ENCODE measurements at regions of chr5 and their contacts with region 1.

Region 1: GRCh38 chr5:138464008-138464387 is 1.3 kb upstream of the EGR1 start:
- DNase-seq: peak; percentile 89 to 96 (median 94)
- H3K4me3 ChIP-seq: peak overlapping the region; percentile 94
- H3K4me3 Mint-ChIP-seq: peak overlapping the region; percentile 87 to 96 (median 90)
- H3K27ac ChIP-seq: peak overlapping the region; percentile 95
- H3K27ac Mint-ChIP-seq: peak overlapping the region; percentile 90 to 98 (median 94)
- H3K4me1 ChIP-seq: peaks cover 42% of the 10 kb centered on the region
- H3K4me1 Mint-ChIP-seq: peaks cover 39 to 60% (median 51%) of the 10 kb centered on the region in 3 donors
- H3K27me3 ChIP-seq: no peaks in the 10 kb centered on the region
- H3K27me3 Mint-ChIP-seq: no peaks in the 10 kb centered on the region

Region 2: GRCh38 chr5:138438724-138439476 is 25.1 kb before region 1 on chr5 and contains the start of gene REEP2:
- CTCF ChIA-PET with region 1: interaction called, 102 read pairs
- POLR2A ChIA-PET with region 1: interaction called, 4 read pairs
- DNase-seq: peak; percentile 50 to 74 (median 56)
- H3K4me3 ChIP-seq: peak within 1 kb of the TSS; percentile 61
- H3K4me3 Mint-ChIP-seq: peak within 1 kb of the TSS; percentile 80 to 95 (median 83)
- H3K27ac ChIP-seq: no peak within 1 kb of the TSS
- H3K27ac Mint-ChIP-seq: peak within 1 kb of the TSS in 6 of 8 donors; percentile 50 to 90 (median 64)
- H3K4me1 ChIP-seq: peaks cover 10% of the 10 kb centered on the region
- H3K4me1 Mint-ChIP-seq: peaks cover 17 to 26% (median 17%) of the 10 kb centered on the region in 3 donors
- H3K27me3 ChIP-seq: no peaks in the 10 kb centered on the region
- H3K27me3 Mint-ChIP-seq: peaks cover 0 to 2% of the 10 kb centered on the region in 2 donors
- total RNA-seq, gene REEP2: 5.0 to 6.6 TPM

Region 3: GRCh38 chr5:138491669-138492559 is 27.9 kb after region 1 on chr5:
- CTCF ChIA-PET with region 1: interaction called, 22 read pairs
- POLR2A ChIA-PET with region 1: interaction called, 9 read pairs
- DNase-seq: peak; percentile 80 to 90 (median 84)
- H3K4me3 ChIP-seq: peak overlapping the region; percentile 62
- H3K4me3 Mint-ChIP-seq: peak overlapping the region; percentile 84 to 91 (median 87)
- H3K27ac ChIP-seq: peak overlapping the region; percentile 47
- H3K27ac Mint-ChIP-seq: peak overlapping the region in 5 of 8 donors; percentile 39 to 91 (median 72)
- H3K4me1 ChIP-seq: peaks cover 18% of the 10 kb centered on the region
- H3K4me1 Mint-ChIP-seq: peaks cover 8 to 20% (median 13%) of the 10 kb centered on the region in 3 donors
- H3K27me3 ChIP-seq: peaks cover 5% of the 10 kb centered on the region
- H3K27me3 Mint-ChIP-seq: peaks cover 9 to 31% of the 10 kb centered on the region in 2 donors

Region 4: DNA sequence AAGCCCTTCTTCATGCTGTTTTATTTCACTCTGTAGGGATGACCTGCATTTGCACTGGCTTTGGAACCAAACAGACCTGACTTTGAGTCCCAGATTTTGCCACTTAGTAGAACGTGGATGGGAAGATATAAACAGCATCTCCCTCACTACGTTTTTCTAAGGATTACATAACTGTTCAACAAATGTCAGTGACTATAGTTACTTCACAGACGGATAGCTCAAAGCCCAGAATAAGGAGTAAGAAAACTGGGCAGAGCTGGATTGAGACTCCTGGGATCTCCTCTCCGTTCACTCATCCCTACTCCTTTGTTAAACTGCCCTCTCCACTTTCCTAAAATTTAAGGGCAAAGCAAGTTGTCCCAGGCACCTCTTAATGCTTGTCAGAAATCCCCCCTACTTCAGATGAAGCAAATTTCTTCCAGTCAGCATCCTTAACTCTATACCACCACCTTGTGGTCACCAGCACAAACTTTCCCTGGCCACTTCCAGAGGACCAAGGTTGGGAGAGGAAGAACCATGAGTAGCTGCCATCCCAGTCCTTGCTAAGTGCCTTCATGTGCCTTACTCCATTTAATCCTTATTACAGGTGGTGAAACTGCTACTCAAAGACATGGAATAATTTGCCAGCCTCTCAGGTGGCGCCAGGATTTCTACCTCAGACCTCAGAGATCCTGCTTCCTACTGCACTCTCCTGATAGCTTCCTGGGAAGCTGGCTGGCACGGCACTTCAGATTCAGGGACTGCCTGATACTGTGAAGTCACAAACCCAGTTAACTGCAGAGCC is 39.7 kb after region 1 on chr5:
- CTCF ChIA-PET with region 1: interaction called, 45 read pairs
- POLR2A ChIA-PET with region 1: interaction called, 6 read pairs
- DNase-seq: peak in 2 of 5 donors; percentile 50 to 52
- H3K4me3 ChIP-seq: no peak overlapping the region
- H3K4me3 Mint-ChIP-seq: no peak overlapping the region
- H3K27ac ChIP-seq: no peak overlapping the region
- H3K27ac Mint-ChIP-seq: peak overlapping the region in 5 of 8 donors; percentile 7 to 77 (median 27)
- H3K4me1 ChIP-seq: no peaks in the 10 kb centered on the region
- H3K4me1 Mint-ChIP-seq: peaks cover 3 to 5% (median 4%) of the 10 kb centered on the region in 3 donors
- H3K27me3 ChIP-seq: no peaks in the 10 kb centered on the region
- H3K27me3 Mint-ChIP-seq: no peaks in the 10 kb centered on the region

Region 5: DNA sequence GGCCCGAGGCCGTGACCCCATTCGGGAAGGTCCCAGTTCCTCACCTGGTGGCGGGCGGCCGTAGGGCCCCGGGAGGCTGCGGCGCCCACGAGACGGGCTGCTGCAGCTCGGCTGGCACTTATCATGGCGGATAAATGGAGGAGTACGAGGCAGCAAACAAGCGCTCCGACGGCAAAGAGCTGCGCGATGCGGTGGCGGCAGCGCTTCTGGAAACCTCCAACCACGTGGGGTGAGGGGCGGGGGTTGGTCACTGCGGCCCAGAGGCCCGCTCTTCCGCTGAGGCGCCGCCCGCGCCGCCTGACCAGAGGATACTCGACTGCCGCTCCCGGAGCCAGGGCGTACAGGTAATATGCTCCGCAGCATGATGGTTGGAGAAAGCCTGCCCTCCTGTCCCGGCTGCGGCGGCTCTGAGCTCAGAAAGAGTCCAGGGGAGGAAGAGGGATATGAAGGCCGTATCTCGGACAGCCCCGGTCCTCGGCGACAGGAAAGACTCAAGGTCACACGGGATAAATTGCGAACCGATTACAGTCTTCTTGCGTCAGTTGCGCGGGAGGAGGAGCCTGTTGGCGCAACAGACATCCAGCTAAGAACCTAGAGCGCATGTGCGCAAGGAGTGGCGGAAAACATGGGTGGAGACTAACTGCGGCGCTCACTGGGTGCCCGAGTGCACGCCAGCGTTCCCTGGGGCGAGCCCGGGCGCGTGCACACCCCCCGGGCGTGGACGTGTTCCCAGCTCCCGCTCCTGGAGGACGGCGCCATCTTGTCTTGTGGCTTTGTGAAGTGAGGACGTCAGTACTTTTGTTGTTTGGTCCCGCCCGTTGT is 111.4 kb after region 1 on chr5 and contains the start of gene HSPA9:
- CTCF ChIA-PET with region 1: interaction called, 4 read pairs
- POLR2A ChIA-PET with region 1: interaction called, 13 read pairs
- DNase-seq: peak; percentile 93 to 98 (median 98)
- H3K4me3 ChIP-seq: peak within 1 kb of the TSS; percentile 97
- H3K4me3 Mint-ChIP-seq: peak within 1 kb of the TSS; percentile 86 to 98 (median 98)
- H3K27ac ChIP-seq: peak within 1 kb of the TSS; percentile 100
- H3K27ac Mint-ChIP-seq: peak within 1 kb of the TSS; percentile 100
- H3K4me1 ChIP-seq: peaks cover 29% of the 10 kb centered on the region
- H3K4me1 Mint-ChIP-seq: peaks cover 28 to 50% (median 34%) of the 10 kb centered on the region in 3 donors
- H3K27me3 ChIP-seq: no peaks in the 10 kb centered on the region
- H3K27me3 Mint-ChIP-seq: peaks cover 0 to 5% of the 10 kb centered on the region in 2 donors
- total RNA-seq, gene HSPA9: 468 to 498 TPM

Measured in CD8-positive, alpha-beta memory T cell (primary cell).